ENCODE measurements at regions of chr12 and their contacts with region 1.

Region 1: GRCh38 chr12:80412369-80412953 is 31.6 kb upstream of the PTPRQ start:
- DNase-seq: no peak
- H3K4me3 Mint-ChIP-seq: no peak overlapping the region
- H3K27ac Mint-ChIP-seq: no peak overlapping the region
- H3K4me1 Mint-ChIP-seq: no peaks in the 10 kb centered on the region
- H3K27me3 Mint-ChIP-seq: no peaks in the 10 kb centered on the region

Region 2: GRCh38 chr12:80033448-80033847 is 379.0 kb before region 1 on chr12:
- CTCF ChIA-PET with region 1: no interaction called
- intact Hi-C with region 1: no loop called
- DNase-seq: no peak
- H3K4me3 Mint-ChIP-seq: no peak overlapping the region
- H3K27ac Mint-ChIP-seq: no peak overlapping the region
- H3K4me1 Mint-ChIP-seq: no peaks in the 10 kb centered on the region
- H3K27me3 Mint-ChIP-seq: peaks cover 7% of the 10 kb centered on the region

Region 3: DNA sequence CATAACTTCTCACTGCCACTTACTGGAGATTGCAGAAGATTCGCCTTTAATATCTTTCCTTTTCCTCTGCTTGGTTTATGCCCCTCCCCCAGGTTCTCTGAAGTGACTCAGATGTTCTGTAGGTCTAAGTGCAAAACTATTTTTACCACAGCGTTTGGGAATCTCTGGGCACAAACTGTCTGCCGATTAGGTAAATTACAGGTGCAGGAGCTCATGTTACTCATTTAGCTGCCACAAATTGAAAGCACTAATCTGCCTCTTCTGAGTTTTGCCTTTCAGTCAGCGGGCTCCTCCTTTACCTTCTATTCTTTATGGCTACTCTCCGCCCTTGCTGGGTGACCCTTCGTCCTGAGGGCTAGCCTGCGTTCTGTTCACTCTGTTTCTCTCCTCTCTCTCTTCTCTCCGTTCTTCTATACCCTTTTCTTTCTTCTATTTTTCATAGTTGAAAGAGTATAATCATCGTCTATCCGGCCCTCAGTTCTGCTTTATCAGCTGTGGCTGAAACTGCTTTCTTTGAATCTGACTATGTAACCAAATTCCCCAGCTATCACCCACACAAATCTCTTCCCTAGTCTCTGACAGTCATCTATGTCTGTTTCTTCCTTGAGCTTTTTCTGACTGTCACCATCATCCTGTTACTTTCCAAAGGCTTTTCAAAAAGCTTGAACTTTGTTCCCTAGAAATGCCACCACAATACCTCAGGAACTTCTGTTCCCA is 290.6 kb after region 1 on chr12:
- CTCF ChIA-PET with region 1: no interaction called
- intact Hi-C with region 1: no loop called
- DNase-seq: no peak
- H3K4me3 Mint-ChIP-seq: no peak overlapping the region
- H3K27ac Mint-ChIP-seq: no peak overlapping the region
- H3K4me1 Mint-ChIP-seq: no peaks in the 10 kb centered on the region
- H3K27me3 Mint-ChIP-seq: peaks cover 21% of the 10 kb centered on the region

Region 4: GRCh38 chr12:80763874-80764273 is 351.4 kb after region 1 on chr12:
- CTCF ChIA-PET with region 1: interaction called, 3 read pairs
- intact Hi-C with region 1: loop called (anchors 1 kb)
- DNase-seq: peak; percentile 9
- H3K4me3 Mint-ChIP-seq: no peak overlapping the region
- H3K27ac Mint-ChIP-seq: no peak overlapping the region
- H3K4me1 Mint-ChIP-seq: no peaks in the 10 kb centered on the region
- H3K27me3 Mint-ChIP-seq: no peaks in the 10 kb centered on the region

Region 5: DNA sequence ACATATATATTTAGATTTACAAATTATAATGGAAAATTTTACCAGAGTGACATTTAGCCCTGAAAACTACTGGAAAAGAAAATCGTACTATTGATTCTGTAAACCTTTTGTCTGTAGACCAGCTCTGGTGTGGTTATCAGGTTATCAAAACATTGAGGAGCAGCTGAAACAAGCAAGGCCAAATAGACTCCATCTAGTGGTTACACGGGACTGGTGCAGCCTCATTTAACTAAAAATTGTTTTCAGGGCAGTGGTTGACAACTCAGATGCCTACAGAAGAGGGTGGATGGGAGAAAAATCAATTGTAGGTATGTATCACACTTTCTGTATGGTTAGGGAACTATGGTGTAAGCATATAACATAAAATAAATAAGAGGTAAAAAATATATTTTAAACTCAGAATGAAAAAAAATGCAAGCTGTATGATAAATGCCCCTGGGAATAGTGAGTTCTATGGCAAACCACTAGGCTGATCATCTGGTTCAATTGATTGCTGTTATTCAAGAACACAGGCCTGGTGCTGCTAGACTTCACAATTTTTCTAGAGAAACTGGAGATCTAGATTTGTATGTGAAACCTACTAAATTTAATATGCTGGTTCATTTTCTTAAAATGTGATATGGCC is 716.6 kb after region 1 on chr12:
- CTCF ChIA-PET with region 1: no interaction called
- intact Hi-C with region 1: loop called (anchors 2 kb)
- DNase-seq: no peak
- H3K4me3 Mint-ChIP-seq: no peak overlapping the region
- H3K27ac Mint-ChIP-seq: no peak overlapping the region
- H3K4me1 Mint-ChIP-seq: no peaks in the 10 kb centered on the region
- H3K27me3 Mint-ChIP-seq: no peaks in the 10 kb centered on the region

Region 6: GRCh38 chr12:81257947-81258551 is 845.6 kb after region 1 on chr12:
- CTCF ChIA-PET with region 1: no interaction called
- intact Hi-C with region 1: loop called (anchors 2 kb)
- DNase-seq: no peak
- H3K4me3 Mint-ChIP-seq: no peak overlapping the region
- H3K27ac Mint-ChIP-seq: no peak overlapping the region
- H3K4me1 Mint-ChIP-seq: no peaks in the 10 kb centered on the region
- H3K27me3 Mint-ChIP-seq: no peaks in the 10 kb centered on the region

Region 7: DNA sequence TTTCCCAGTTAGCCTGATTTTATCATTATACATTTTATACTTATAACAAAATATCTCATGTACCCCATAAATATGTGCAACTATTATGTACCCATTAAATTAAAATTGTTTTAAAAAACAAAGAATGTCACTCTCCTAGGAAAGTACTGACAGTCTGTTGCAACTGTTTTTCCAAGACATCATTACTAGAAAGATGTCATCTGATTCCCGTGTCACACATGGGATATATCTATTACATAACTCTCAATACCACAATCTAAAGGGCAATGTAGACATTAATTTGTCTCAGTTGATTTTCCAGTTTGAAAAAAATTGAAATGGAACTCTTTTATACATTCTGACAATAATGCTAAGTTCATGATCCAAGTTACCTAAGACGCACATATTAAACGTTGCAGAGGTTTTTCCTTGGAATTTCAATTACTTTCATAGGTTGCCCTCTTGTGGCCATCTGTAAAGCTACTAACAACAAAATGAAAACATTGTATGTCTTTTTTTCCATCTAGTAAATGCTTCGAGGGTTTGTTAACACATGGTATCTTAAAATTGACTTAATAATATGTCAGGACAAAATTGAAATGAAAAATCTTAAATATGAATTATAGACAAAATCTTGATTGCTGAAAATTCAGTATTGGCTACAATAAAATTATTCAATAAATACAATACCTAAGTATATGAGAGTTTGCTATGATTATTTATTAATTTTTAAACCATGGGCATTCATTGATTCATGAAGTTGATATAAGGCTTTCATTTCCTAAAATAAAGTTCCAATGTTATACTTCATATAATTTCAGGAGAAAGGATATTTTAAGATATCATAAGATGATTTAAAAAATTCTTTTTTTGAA is 1215.1 kb after region 1 on chr12:
- CTCF ChIA-PET with region 1: no interaction called
- intact Hi-C with region 1: loop called (anchors 5 kb)
- DNase-seq: no peak
- H3K4me3 Mint-ChIP-seq: no peak overlapping the region
- H3K27ac Mint-ChIP-seq: no peak overlapping the region
- H3K4me1 Mint-ChIP-seq: no peaks in the 10 kb centered on the region
- H3K27me3 Mint-ChIP-seq: peaks cover 2% of the 10 kb centered on the region

Region 8: GRCh38 chr12:82326905-82327503 is 1914.5 kb after region 1 on chr12:
- CTCF ChIA-PET with region 1: no interaction called
- intact Hi-C with region 1: loop called (anchors 10 kb)
- DNase-seq: no peak
- H3K4me3 Mint-ChIP-seq: no peak overlapping the region
- H3K27ac Mint-ChIP-seq: no peak overlapping the region
- H3K4me1 Mint-ChIP-seq: no peaks in the 10 kb centered on the region
- H3K27me3 Mint-ChIP-seq: no peaks in the 10 kb centered on the region